ENCODE measurements at regions of chr18 and their contacts with region 1.

Region 1: GRCh38 chr18:12092398-12093229 is 1.0 kb upstream of the ANKRD62 start:
- DNase-seq: peak; percentile 23
- ATAC-seq: peak; percentile 72 to 73

Region 2: DNA sequence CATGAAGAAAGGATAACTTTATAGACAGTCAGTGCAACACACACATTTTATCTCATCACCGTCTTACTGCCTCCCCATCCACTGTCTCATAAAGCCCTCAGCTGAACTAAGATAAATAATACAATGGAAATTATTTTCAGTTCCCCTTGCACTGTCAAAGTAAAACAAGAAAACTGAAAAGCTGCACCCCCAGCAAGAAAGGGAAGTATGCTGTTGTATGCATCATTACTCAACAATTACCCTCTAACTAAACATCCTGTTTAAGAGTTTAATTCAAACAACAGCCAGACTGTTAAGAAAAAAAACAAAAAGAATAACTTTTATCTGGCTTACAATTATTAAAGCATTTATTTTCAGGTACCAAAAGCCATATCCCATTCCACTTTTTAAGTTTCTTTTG is 209.5 kb before region 1 on chr18:
- intact Hi-C with region 1: no loop called
- DNase-seq: no peak
- ATAC-seq: peak in 1 of 2 donors; percentile 49

Region 3: GRCh38 chr18:12236934-12237832 is 144.6 kb after region 1 on chr18:
- intact Hi-C with region 1: loop called (anchors 10 kb)
- DNase-seq: peak; percentile 78
- ATAC-seq: peak; percentile 93 to 97